ENCODE measurements at regions of chr3 and their contacts with region 1.

Region 1: GRCh38 chr3:9362731-9363530 is at the start of gene THUMPD3:
- DNase-seq: peak; percentile 96
- ATAC-seq: peak; percentile 99
- total RNA-seq, gene THUMPD3: 48.3 TPM

Region 2: GRCh38 chr3:9373465-9373864 is 10.5 kb after region 1 on chr3:
- intact Hi-C with region 1: no loop called
- DNase-seq: no peak
- ATAC-seq: no peak

Region 3: GRCh38 chr3:9396700-9397521 is 34.0 kb after region 1 on chr3:
- intact Hi-C with region 1: loop called (anchors 2 kb)
- DNase-seq: peak; percentile 99
- ATAC-seq: peak; percentile 89

Region 4: DNA sequence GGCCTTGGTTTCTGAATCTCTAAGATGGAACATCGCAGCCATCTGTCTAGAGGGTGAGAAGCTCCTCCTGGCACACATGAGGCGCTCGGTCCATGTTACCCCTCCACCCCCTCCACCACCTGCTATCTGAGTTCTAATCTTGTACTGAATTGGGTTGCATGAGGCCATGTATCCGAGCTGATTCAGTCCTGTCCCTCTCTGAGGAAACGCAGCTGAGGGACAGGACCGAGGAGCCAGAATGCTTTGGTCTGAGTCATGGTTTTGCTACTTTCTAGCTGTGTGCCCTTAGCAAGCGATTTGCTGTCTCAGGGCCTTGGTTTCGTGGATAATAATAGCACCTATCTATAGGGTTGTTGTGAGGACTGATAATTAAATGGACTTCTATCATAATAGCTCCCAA is 1045.7 kb after region 1 on chr3:
- intact Hi-C with region 1: no loop called
- DNase-seq: no peak
- ATAC-seq: no peak